K562 (cell line): ENCODE measurements at regions of chr5 and their contacts with region 1.

Region 1: GRCh38 chr5:139696894-139697658 is 48.9 kb downstream of the CXXC5 start:
- DNase-seq: peak; percentile 92 to 94 (median 92)
- ATAC-seq: peak; percentile 85
- H3K4me3 ChIP-seq: peak overlapping the region; percentile 55
- H3K27ac ChIP-seq: peak overlapping the region; percentile 97
- H3K4me1 ChIP-seq: peaks cover 58 to 66% of the 10 kb centered on the region in 2 experiments
- H3K27me3 ChIP-seq: no peaks in the 10 kb centered on the region
- CTCF ChIP-seq: no peak
- EP300 ChIP-seq: peak; percentile 39
- POLR2A ChIP-seq: peak; percentile 87
- RAD21 ChIP-seq: no peak

Region 2: DNA sequence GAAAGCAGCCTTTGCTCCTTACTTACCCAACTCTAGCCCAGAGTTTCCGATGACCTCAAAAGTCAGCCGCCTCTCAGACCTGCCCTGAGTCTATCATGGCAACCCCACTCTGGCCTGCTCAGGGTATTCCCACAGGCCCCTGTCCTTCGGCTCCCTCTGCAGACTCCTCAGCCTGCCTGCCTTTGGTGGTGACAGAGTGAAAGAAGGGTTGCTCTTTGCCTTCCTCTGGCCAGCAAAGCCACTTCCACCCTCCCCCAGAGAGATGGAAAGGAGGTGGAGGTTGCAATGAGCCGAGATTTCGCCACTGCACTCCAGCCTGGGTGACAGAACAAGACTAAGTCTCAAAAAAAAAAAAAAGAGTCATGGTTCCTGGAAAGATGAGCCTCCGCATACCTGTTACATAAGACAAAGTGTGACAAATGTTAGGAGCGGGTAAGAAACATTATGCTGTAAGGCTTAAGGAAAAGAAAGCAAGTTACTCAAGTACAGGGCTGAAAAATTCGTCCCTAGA is 228.6 kb before region 1 on chr5:
- CTCF ChIA-PET with region 1: no interaction called
- POLR2A ChIA-PET with region 1: no interaction called
- in situ Hi-C with region 1: no loop called
- intact Hi-C with region 1: no loop called
- DNase-seq: peak in 3 of 4 experiments; percentile 25 to 38 (median 34)
- ATAC-seq: peak; percentile 81
- H3K4me3 ChIP-seq: no peak overlapping the region
- H3K27ac ChIP-seq: peak overlapping the region; percentile 33; the same call in 1 of the 3 replicates
- H3K4me1 ChIP-seq: peaks cover 7 to 21% of the 10 kb centered on the region in 2 experiments
- H3K27me3 ChIP-seq: no peaks in the 10 kb centered on the region
- CTCF ChIP-seq: peak in 2 of 3 experiments; percentile 27 to 36; a peak in 3 of 6 replicates
- EP300 ChIP-seq: no peak
- POLR2A ChIP-seq: no peak
- RAD21 ChIP-seq: peak; percentile 23 to 37; a peak in 3 of 4 replicates

Region 3: DNA sequence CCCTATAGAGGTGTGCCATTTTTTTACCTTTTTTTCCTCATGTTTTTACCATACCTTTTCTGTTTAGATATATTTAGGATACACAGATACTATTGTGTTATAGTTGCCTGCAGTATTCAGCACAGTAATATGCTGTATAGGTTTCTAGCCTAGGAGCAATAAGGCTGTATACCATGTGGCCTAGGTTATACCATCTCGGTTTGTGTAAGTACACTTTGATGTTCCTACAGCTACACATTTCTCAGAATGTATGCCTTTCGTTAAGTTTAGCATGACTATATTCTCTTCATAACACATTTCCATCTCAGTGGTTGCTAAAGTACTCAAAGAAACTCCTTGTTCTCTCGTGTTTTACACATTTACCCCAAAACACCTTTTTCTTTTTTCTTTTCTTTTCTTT is 112.9 kb before region 1 on chr5:
- CTCF ChIA-PET with region 1: no interaction called
- POLR2A ChIA-PET with region 1: no interaction called
- in situ Hi-C with region 1: no loop called
- intact Hi-C with region 1: no loop called
- DNase-seq: no peak
- ATAC-seq: no peak
- H3K4me3 ChIP-seq: no peak overlapping the region
- H3K27ac ChIP-seq: no peak overlapping the region
- H3K4me1 ChIP-seq: peaks cover 8% of the 10 kb centered on the region in 2 experiments; a peak in 3 of 5 replicates
- H3K27me3 ChIP-seq: no peaks in the 10 kb centered on the region
- CTCF ChIP-seq: no peak
- EP300 ChIP-seq: no peak
- POLR2A ChIP-seq: no peak
- RAD21 ChIP-seq: no peak

Region 4: GRCh38 chr5:139711067-139711905 is 14.2 kb after region 1 on chr5:
- CTCF ChIA-PET with region 1: no interaction called
- POLR2A ChIA-PET with region 1: interaction called, 28 read pairs
- in situ Hi-C with region 1: no loop called
- intact Hi-C with region 1: loop called (anchors 2 kb)
- DNase-seq: peak; percentile 72 to 87 (median 80)
- ATAC-seq: peak; percentile 65
- H3K4me3 ChIP-seq: peak overlapping the region; percentile 57
- H3K27ac ChIP-seq: peak overlapping the region; percentile 81; the same call in 2 of the 3 replicates
- H3K4me1 ChIP-seq: peaks cover 40 to 50% of the 10 kb centered on the region in 2 experiments
- H3K27me3 ChIP-seq: no peaks in the 10 kb centered on the region
- CTCF ChIP-seq: peak; percentile 37 to 63 (median 54); a peak in 5 of 6 replicates
- EP300 ChIP-seq: no peak
- POLR2A ChIP-seq: no peak
- RAD21 ChIP-seq: peak in 1 of 2 experiments; percentile 58; a peak in 2 of 4 replicates

Region 5: DNA sequence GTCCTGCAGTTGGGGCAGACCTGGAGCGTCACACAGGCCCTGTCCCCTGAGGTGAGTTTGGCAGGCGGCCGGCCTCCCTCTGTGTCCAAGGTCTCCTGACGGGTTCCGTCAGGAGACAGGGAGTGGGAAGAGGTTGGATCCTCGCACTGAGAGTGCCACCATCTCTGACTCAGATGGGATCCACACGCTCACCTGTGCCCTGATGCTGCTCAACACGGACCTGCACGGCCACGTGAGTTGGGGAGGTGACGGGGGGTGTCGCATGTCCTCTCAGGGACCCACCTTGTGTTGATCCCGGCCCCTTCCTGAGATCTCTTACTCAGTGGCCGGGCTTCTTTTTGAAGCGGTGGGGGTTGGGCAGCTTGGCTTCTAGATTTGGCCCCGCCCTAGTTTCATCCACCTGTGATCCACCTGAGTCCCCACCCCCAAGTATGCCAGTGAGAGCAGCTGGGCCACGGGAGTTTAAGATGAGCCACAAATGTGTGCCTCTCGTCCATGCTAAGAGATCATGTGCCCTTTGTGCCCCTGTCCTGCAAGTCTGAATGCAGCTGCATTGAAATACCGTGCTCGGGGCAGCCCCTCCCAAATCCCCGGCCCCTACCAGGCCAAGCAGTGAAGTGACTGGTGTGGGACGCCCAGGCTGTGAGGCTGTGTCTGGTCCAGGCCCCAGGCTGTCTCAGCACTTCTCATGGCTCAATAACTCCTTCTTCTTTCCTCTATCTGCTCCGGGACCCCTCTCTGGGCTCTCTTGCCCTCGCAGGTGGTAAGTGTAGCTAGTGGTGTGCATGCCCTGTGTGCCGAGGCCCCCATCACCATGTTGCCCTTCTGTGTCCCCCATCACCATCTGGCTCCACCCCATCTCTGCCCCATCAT is 125.7 kb after region 1 on chr5:
- CTCF ChIA-PET with region 1: no interaction called
- POLR2A ChIA-PET with region 1: no interaction called
- in situ Hi-C with region 1: no loop called
- intact Hi-C with region 1: no loop called
- DNase-seq: no peak
- ATAC-seq: no peak
- H3K4me3 ChIP-seq: no peak overlapping the region
- H3K27ac ChIP-seq: no peak overlapping the region
- H3K4me1 ChIP-seq: no peaks in the 10 kb centered on the region
- H3K27me3 ChIP-seq: peaks cover 26 to 80% of the 10 kb centered on the region in 2 experiments
- CTCF ChIP-seq: no peak
- EP300 ChIP-seq: no peak
- POLR2A ChIP-seq: no peak
- RAD21 ChIP-seq: no peak